GM10248 (cell line): ENCODE measurements at regions of chr12 and their contacts with region 1.

Region 1: DNA sequence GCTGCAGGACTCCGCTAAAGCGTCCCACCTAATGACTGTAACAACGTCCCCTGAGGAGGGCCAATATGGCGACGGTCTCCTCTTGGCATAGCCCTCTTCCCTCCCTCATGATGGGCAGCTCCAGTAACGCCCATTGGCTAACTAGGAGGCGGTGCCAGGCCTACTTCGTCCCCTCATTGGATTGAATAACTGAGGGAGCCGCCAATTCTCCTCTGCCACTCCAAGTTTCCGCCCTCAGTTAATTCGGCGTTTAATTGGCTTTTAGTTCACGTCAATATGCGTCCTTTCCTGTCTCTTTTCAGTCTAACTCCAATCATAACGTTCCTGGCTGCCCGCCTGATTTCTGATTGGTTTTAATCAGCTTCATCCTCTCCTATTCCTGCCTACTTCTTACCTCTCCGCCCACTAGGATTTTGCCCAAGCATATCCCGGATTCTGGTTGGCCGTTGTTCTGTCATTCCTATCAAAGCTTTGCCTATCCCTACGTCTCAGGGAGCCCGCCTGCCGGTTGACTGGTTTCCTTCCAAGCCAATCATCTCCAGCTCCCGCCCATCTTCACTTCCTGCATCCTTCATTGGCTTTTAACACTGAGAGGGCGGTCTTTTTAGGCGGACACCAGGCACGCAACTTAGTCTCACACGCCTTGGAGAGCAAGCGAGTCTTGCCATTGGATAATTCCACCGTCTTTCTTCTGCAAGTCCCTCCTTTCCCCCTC is 430 bp upstream of the SP1 start:
- DNase-seq: peak; percentile 88
- CTCF ChIP-seq: no peak

Region 2: GRCh38 chr12:53391729-53392128 is 12.2 kb after region 1 on chr12:
- CTCF ChIA-PET with region 1: interaction called, 12 read pairs
- POLR2A ChIA-PET with region 1: interaction called, 4 read pairs
- DNase-seq: no peak
- CTCF ChIP-seq: no peak

Region 3: GRCh38 chr12:53402871-53403270 is 23.3 kb after region 1 on chr12:
- CTCF ChIA-PET with region 1: interaction called, 12 read pairs
- POLR2A ChIA-PET with region 1: no interaction called
- DNase-seq: no peak
- CTCF ChIP-seq: no peak

Region 4: GRCh38 chr12:53414756-53415417 is 35.3 kb after region 1 on chr12:
- CTCF ChIA-PET with region 1: interaction called, 23 read pairs
- POLR2A ChIA-PET with region 1: interaction called, 3 read pairs
- DNase-seq: peak; percentile 2
- CTCF ChIP-seq: no peak

Region 5: GRCh38 chr12:53599579-53599978 is 220.0 kb after region 1 on chr12:
- CTCF ChIA-PET with region 1: no interaction called
- POLR2A ChIA-PET with region 1: no interaction called
- DNase-seq: no peak
- CTCF ChIP-seq: no peak